Kidney (tissue), 22 donors: ENCODE measurements at regions of chr4 and their contacts with region 1.

Region 1: GRCh38 chr4:120156120-120156718 is 89.6 kb upstream of the MAD2L1 start:
- DNase-seq: peak in 3 of 5 donors; percentile 42 to 89 (median 87)
- H3K4me3 ChIP-seq: no peak overlapping the region
- H3K27ac ChIP-seq: no peak overlapping the region
- H3K4me1 ChIP-seq: no peaks in the 10 kb centered on the region
- H3K27me3 ChIP-seq: no peaks in the 10 kb centered on the region
- CTCF ChIP-seq: peak; percentile 68

Region 2: GRCh38 chr4:120096508-120097297 is 59.5 kb before region 1 on chr4:
- intact Hi-C with region 1: no loop called
- DNase-seq: no peak
- H3K4me3 ChIP-seq: no peak overlapping the region
- H3K27ac ChIP-seq: no peak overlapping the region
- H3K4me1 ChIP-seq: no peaks in the 10 kb centered on the region
- H3K27me3 ChIP-seq: no peaks in the 10 kb centered on the region
- CTCF ChIP-seq: no peak

Region 3: GRCh38 chr4:120232050-120232449 is 75.8 kb after region 1 on chr4:
- intact Hi-C with region 1: no loop called
- DNase-seq: no peak
- H3K4me3 ChIP-seq: no peak overlapping the region
- H3K27ac ChIP-seq: no peak overlapping the region
- H3K4me1 ChIP-seq: no peaks in the 10 kb centered on the region
- H3K27me3 ChIP-seq: no peaks in the 10 kb centered on the region
- CTCF ChIP-seq: no peak

Region 4: DNA sequence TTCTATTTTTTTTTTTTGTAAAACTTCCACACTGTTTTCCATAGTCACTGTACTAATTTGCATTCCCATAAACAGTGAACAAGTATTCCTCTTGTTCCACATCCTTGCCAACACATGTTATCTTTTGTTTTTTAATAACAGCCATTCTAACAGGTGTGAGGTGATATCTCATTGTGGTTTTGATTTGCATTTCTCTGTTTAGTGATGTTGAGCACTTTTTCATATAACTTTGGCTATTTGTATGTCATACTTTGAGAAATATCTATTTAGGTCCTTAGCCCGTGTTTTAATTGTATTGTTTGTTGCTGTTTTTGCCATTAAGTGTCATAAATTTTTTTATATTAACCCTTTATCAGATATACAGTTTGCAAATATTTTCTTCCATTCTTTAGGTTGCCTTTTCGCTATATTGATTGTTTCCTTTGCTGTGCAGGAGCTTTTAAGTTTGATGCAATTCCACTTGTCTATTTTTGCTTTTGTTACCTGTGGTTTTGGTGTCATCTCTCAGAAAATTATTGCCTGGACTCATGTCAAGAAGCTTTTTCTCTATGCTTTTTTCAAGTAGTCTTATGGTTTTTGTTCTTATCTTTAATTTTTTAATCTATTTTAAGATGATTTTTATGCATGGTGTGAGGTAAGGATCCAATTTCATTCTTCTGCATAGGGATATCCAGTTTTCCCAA is 944.0 kb after region 1 on chr4:
- intact Hi-C with region 1: loop called (anchors 5 kb)
- DNase-seq: no peak
- H3K4me3 ChIP-seq: no peak overlapping the region
- H3K27ac ChIP-seq: no peak overlapping the region
- H3K4me1 ChIP-seq: no peaks in the 10 kb centered on the region
- H3K27me3 ChIP-seq: no peaks in the 10 kb centered on the region
- CTCF ChIP-seq: no peak